A673 (cell line): ENCODE measurements at regions of chr17 and their contacts with region 1.

Region 1: GRCh38 chr17:45013021-45013997 is 38.1 kb downstream of the DCAKD start:
- DNase-seq: no peak
- H3K4me3 ChIP-seq: no peak overlapping the region
- H3K27ac ChIP-seq: no peak overlapping the region
- H3K4me1 ChIP-seq: no peaks in the 10 kb centered on the region
- H3K27me3 ChIP-seq: no peaks in the 10 kb centered on the region
- CTCF ChIP-seq: no peak

Region 2: GRCh38 chr17:44689477-44690217 is 323.7 kb before region 1 on chr17 and contains the start of gene CCDC43:
- CTCF ChIA-PET with region 1: no interaction called
- POLR2A ChIA-PET with region 1: no interaction called
- intact Hi-C with region 1: no loop called
- DNase-seq: peak; percentile 90
- H3K4me3 ChIP-seq: peak within 1 kb of the TSS; percentile 89
- H3K27ac ChIP-seq: peak within 1 kb of the TSS; percentile 77
- H3K4me1 ChIP-seq: no peaks in the 10 kb centered on the region
- H3K27me3 ChIP-seq: no peaks in the 10 kb centered on the region
- CTCF ChIP-seq: no peak
- total RNA-seq, gene CCDC43: 20.3 and 21.1 TPM in 2 replicates

Region 3: GRCh38 chr17:44947461-44948314 is 65.6 kb before region 1 on chr17 and contains the start of gene KIF18B:
- CTCF ChIA-PET with region 1: no interaction called
- POLR2A ChIA-PET with region 1: no interaction called
- intact Hi-C with region 1: loop called (anchors 2 kb)
- DNase-seq: peak; percentile 94
- H3K4me3 ChIP-seq: peak within 1 kb of the TSS; percentile 84
- H3K27ac ChIP-seq: peak within 1 kb of the TSS; percentile 82
- H3K4me1 ChIP-seq: no peaks in the 10 kb centered on the region
- H3K27me3 ChIP-seq: no peaks in the 10 kb centered on the region
- CTCF ChIP-seq: no peak
- total RNA-seq, gene KIF18B: 49.4 and 54.3 TPM in 2 replicates

Region 4: DNA sequence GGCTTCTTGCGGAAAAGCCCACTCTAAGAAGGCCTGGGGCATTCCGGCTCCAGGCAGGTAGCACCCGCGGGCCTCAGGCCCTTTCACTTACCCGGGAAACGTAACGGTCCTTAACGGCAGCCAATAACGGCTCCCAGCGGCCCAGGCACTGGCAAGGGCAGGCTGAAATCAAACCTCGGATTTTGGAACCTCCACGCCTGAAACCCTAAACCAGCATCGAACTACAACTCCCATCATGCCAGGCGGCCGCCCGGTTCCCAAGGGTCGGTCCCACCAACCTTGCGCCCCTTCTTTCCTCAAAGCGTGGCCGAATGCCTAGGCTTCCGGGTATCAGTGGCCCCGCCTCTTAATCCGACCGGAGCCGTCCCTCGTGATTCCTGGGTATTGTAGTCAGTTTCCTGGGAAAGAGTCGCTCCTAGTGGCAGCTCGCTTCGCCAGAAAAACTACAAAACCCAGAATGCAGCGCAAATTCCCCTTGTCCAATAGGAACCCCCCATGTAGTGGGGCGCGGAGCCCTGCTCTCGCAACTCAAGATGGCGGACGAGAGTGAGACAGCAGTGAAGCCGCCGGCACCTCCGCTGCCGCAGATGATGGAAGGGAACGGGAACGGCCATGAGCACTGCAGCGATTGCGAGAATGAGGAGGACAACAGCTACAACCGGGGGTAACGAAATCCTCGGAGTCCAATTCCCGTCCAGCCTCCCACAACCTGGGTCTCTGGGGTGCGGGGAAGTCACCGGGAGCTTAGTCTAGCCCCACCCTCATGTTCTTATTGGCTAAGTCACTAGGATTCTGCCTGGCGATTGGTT is 47.7 kb after region 1 on chr17 and contains the start of gene NMT1:
- CTCF ChIA-PET with region 1: no interaction called
- POLR2A ChIA-PET with region 1: no interaction called
- intact Hi-C with region 1: no loop called
- DNase-seq: peak; percentile 97
- H3K4me3 ChIP-seq: peak within 1 kb of the TSS; percentile 64
- H3K27ac ChIP-seq: peak within 1 kb of the TSS; percentile 91
- H3K4me1 ChIP-seq: peaks cover 9% of the 10 kb centered on the region
- H3K27me3 ChIP-seq: no peaks in the 10 kb centered on the region
- CTCF ChIP-seq: no peak
- total RNA-seq, gene NMT1: 108 and 118 TPM in 2 replicates

Region 5: GRCh38 chr17:45740553-45741330 is 727.4 kb after region 1 on chr17:
- CTCF ChIA-PET with region 1: no interaction called
- POLR2A ChIA-PET with region 1: no interaction called
- intact Hi-C with region 1: no loop called
- DNase-seq: peak; percentile 46
- H3K4me3 ChIP-seq: no peak overlapping the region
- H3K27ac ChIP-seq: no peak overlapping the region
- H3K4me1 ChIP-seq: no peaks in the 10 kb centered on the region
- H3K27me3 ChIP-seq: peaks cover 17% of the 10 kb centered on the region
- CTCF ChIP-seq: no peak